ENCODE measurements at regions of chr1 and their contacts with region 1.

Region 1: GRCh38 chr1:89804642-89805237 is 16.1 kb upstream of the LRRC8D start:
- DNase-seq: peak; percentile 85 to 89 (median 88)
- H3K4me3 ChIP-seq: no peak overlapping the region
- H3K4me3 Mint-ChIP-seq: no peak overlapping the region
- H3K27ac ChIP-seq: no peak overlapping the region
- H3K27ac Mint-ChIP-seq: no peak overlapping the region
- H3K4me1 ChIP-seq: peaks cover 25 to 35% of the 10 kb centered on the region in 2 donors
- H3K4me1 Mint-ChIP-seq: peaks cover 31% of the 10 kb centered on the region
- H3K27me3 ChIP-seq: no peaks in the 10 kb centered on the region
- H3K27me3 Mint-ChIP-seq: peaks cover 0 to 4% (median 0%) of the 10 kb centered on the region in 3 donors
- CTCF ChIP-seq: peak; percentile 96

Region 2: GRCh38 chr1:89641781-89642180 is 163.0 kb before region 1 on chr1:
- intact Hi-C with region 1: no loop called
- DNase-seq: peak in 2 of 3 donors; percentile 29 to 51
- H3K4me3 ChIP-seq: peak overlapping the region in 1 of 3 experiments; percentile 11
- H3K4me3 Mint-ChIP-seq: no peak overlapping the region
- H3K27ac ChIP-seq: peak overlapping the region in 1 of 2 donors; percentile 58
- H3K27ac Mint-ChIP-seq: peak overlapping the region; percentile 73 to 87 (median 79)
- H3K4me1 ChIP-seq: peaks cover 33 to 56% of the 10 kb centered on the region in 2 donors
- H3K4me1 Mint-ChIP-seq: peaks cover 54% of the 10 kb centered on the region
- H3K27me3 ChIP-seq: no peaks in the 10 kb centered on the region
- H3K27me3 Mint-ChIP-seq: no peaks in the 10 kb centered on the region
- CTCF ChIP-seq: no peak

Region 3: GRCh38 chr1:89843281-89844121 is 38.8 kb after region 1 on chr1:
- intact Hi-C with region 1: loop called in 1 of 2 experiments (anchors 2 kb)
- DNase-seq: peak; percentile 42 to 63 (median 51)
- H3K4me3 ChIP-seq: peak overlapping the region; percentile 70 to 90 (median 74)
- H3K4me3 Mint-ChIP-seq: peak overlapping the region; percentile 85 to 90
- H3K27ac ChIP-seq: peak overlapping the region in 1 of 2 donors; percentile 79
- H3K27ac Mint-ChIP-seq: peak overlapping the region; percentile 55 to 89 (median 84)
- H3K4me1 ChIP-seq: peaks cover 26 to 29% of the 10 kb centered on the region in 2 donors
- H3K4me1 Mint-ChIP-seq: peaks cover 57% of the 10 kb centered on the region
- H3K27me3 ChIP-seq: no peaks in the 10 kb centered on the region
- H3K27me3 Mint-ChIP-seq: no peaks in the 10 kb centered on the region
- CTCF ChIP-seq: peak; percentile 96

Region 4: GRCh38 chr1:89855413-89856123 is 50.8 kb after region 1 on chr1:
- intact Hi-C with region 1: loop called in 1 of 2 experiments (anchors 10 kb)
- DNase-seq: no peak
- H3K4me3 ChIP-seq: no peak overlapping the region
- H3K4me3 Mint-ChIP-seq: no peak overlapping the region
- H3K27ac ChIP-seq: peak overlapping the region in 1 of 2 donors; percentile 55
- H3K27ac Mint-ChIP-seq: peak overlapping the region in 1 of 7 donors; percentile 5
- H3K4me1 ChIP-seq: no peaks in the 10 kb centered on the region
- H3K4me1 Mint-ChIP-seq: no peaks in the 10 kb centered on the region
- H3K27me3 ChIP-seq: no peaks in the 10 kb centered on the region
- H3K27me3 Mint-ChIP-seq: no peaks in the 10 kb centered on the region
- CTCF ChIP-seq: no peak

Region 5: GRCh38 chr1:89987170-89987819 is 182.6 kb after region 1 on chr1:
- intact Hi-C with region 1: loop called (anchors 5 kb)
- DNase-seq: peak; percentile 55 to 74 (median 61)
- H3K4me3 ChIP-seq: no peak overlapping the region
- H3K4me3 Mint-ChIP-seq: no peak overlapping the region
- H3K27ac ChIP-seq: no peak overlapping the region
- H3K27ac Mint-ChIP-seq: no peak overlapping the region
- H3K4me1 ChIP-seq: no peaks in the 10 kb centered on the region
- H3K4me1 Mint-ChIP-seq: no peaks in the 10 kb centered on the region
- H3K27me3 ChIP-seq: no peaks in the 10 kb centered on the region
- H3K27me3 Mint-ChIP-seq: peaks cover 0 to 4% (median 1%) of the 10 kb centered on the region in 3 donors
- CTCF ChIP-seq: peak; percentile 93

Measured in CD14-positive monocyte (primary cell).